Caco-2 (cell line): ENCODE measurements at regions of chr10 and their contacts with region 1.

Region 1: GRCh38 chr10:97138174-97138573 is 47.6 kb downstream of the SLIT1 start:
- DNase-seq: peak; percentile 56 to 66
- H3K4me3 ChIP-seq: no peak overlapping the region
- H3K4me3 Mint-ChIP-seq: no peak overlapping the region
- H3K27ac Mint-ChIP-seq: no peak overlapping the region
- H3K4me1 ChIP-seq: no peaks in the 10 kb centered on the region; the same call in 1 of the 2 replicates
- H3K4me1 Mint-ChIP-seq: no peaks in the 10 kb centered on the region
- H3K27me3 ChIP-seq: no peaks in the 10 kb centered on the region
- H3K27me3 Mint-ChIP-seq: peaks cover 9% of the 10 kb centered on the region
- CTCF ChIP-seq: peak; percentile 62 to 68

Region 2: DNA sequence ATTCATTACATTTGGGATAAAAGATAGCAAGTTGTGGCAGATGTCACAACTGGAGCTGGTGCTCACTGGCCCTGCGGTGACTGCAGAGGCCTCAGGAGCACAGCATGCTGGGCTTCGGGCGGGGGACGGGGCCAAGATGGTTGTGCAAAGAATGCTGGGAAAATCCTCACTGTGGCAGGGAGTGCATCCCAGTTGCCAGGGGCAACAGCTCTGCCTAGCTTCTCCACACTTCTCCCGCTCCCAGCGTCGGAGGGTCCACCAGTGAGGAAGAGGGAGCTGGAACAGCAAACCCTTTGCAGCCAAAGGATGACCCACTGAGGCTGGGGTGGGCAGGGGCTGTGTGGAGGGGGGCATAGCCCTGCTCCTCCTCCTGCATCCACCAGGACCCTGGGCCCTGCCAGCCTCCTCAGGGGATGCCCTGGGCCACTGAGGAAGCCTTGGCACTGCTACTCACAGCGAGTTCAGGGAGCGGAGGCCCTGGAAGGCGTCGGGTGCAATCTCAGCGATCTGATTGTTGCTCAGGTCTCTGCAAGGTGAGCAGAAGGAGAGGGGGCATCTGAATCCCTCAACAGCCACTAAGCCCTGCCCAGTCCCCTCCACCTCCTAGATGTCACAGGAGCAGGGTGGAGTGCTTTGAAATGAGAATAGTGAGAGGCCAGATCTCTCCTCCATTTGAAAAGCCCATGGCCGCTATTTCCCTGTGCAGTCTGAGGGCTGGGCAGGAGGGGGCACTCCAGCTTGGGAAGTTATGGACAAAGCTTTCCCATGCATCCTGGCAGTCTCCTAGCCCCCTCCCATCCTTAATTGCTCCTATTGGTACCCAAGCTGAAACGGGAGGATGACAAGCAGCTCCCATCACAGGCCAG is 78.9 kb before region 1 on chr10:
- CTCF ChIA-PET with region 1: no interaction called
- POLR2A ChIA-PET with region 1: no interaction called
- intact Hi-C with region 1: no loop called
- DNase-seq: no peak
- H3K4me3 ChIP-seq: no peak overlapping the region
- H3K4me3 Mint-ChIP-seq: no peak overlapping the region
- H3K27ac Mint-ChIP-seq: no peak overlapping the region
- H3K4me1 ChIP-seq: no peaks in the 10 kb centered on the region
- H3K4me1 Mint-ChIP-seq: no peaks in the 10 kb centered on the region
- H3K27me3 ChIP-seq: no peaks in the 10 kb centered on the region
- H3K27me3 Mint-ChIP-seq: no peaks in the 10 kb centered on the region
- CTCF ChIP-seq: peak in 1 of 2 experiments; percentile 16

Region 3: GRCh38 chr10:97196223-97197029 is 58.3 kb after region 1 on chr10:
- CTCF ChIA-PET with region 1: no interaction called
- POLR2A ChIA-PET with region 1: no interaction called
- intact Hi-C with region 1: loop called (anchors 1 kb)
- DNase-seq: peak; percentile 62 to 73
- H3K4me3 ChIP-seq: peak overlapping the region; percentile 41
- H3K4me3 Mint-ChIP-seq: peak overlapping the region; percentile 65
- H3K27ac Mint-ChIP-seq: no peak overlapping the region
- H3K4me1 ChIP-seq: no peaks in the 10 kb centered on the region
- H3K4me1 Mint-ChIP-seq: no peaks in the 10 kb centered on the region
- H3K27me3 ChIP-seq: no peaks in the 10 kb centered on the region
- H3K27me3 Mint-ChIP-seq: peaks cover 4% of the 10 kb centered on the region
- CTCF ChIP-seq: peak; percentile 88 to 91